AG04449 (cell line): ENCODE measurements at regions of chr16 and their contacts with region 1.

Region 1: DNA sequence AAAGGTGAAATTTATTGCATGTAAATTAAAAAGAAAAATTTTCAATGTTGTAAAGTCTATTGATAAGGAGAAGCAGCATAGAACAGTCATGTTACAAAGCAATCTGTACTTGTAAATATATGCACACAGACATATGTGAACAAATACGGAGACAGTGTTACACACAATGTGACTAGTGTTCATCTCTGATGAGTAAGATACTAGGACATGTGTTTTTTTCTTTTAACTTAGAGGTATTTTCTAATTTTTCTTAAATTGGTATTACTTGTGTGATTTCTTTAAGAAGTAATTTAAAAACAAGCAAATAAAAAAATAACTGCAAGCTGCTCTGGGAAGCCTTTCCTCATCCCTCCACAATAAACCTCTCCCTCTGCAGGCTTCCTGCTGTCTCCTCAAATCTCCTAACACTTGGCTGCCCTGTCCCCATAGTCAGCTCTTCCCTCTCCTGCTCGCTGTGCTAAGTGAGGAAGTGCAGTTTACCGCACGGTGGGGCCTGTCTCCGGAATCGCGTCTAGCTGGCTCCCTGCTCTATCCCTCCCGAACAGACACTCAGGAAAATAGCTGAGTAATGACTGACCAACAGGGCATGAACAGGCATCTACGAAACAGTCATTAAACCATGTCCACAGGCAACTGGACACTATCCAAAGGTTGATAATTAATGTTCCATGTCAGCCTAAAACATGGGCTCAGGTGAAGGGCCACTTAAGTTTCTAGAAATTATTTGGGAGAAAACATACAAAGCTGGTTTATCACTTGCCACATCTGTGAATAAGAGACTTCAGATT is 35.9 kb downstream of the CMTM4 start:
- DNase-seq: no peak
- H3K4me3 ChIP-seq: no peak overlapping the region
- CTCF ChIP-seq: peak; percentile 53

Region 2: DNA sequence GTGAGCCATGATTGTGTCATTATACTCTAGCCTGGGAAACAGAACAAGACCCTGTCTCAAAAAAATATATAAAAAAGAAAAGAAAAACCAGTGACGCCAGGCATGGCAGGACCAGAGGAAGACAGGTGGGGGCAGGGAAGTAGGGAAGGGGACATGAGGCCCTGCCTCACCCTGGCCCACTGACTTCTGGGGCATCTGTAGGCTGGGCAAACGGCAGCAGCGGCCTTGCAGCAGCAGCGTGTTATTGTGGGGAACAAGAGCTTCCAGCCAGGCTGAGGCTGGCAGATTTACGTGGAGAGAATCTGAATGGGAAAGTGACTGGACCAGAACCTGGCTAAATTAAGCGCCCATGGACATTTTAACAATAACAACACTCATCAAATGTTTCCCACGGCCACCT is 16.6 kb after region 1 on chr16:
- CTCF ChIA-PET with region 1: interaction called, 15 read pairs
- POLR2A ChIA-PET with region 1: no interaction called
- DNase-seq: no peak
- H3K4me3 ChIP-seq: no peak overlapping the region
- CTCF ChIP-seq: no peak

Region 3: DNA sequence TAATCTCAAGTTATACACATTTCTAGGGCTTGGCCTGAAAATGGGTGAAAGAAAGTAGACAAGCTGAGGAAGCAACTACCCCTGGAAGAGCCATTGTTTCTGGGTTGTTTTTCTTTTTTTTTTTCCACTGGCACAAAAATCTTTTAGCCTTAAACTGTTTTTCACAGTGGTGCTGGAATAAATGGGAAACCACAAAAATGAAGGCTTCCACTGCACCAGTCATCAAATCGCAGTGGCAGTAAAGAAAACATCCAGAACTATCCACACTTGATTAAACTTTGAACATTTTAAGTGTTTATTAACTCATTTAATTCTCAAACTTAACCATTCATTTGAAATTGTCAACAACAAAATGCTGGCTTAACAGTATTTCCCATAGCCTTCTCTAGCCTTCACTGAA is 21.7 kb after region 1 on chr16:
- CTCF ChIA-PET with region 1: interaction called, 15 read pairs
- POLR2A ChIA-PET with region 1: no interaction called
- DNase-seq: no peak
- H3K4me3 ChIP-seq: no peak overlapping the region
- CTCF ChIP-seq: no peak

Region 4: DNA sequence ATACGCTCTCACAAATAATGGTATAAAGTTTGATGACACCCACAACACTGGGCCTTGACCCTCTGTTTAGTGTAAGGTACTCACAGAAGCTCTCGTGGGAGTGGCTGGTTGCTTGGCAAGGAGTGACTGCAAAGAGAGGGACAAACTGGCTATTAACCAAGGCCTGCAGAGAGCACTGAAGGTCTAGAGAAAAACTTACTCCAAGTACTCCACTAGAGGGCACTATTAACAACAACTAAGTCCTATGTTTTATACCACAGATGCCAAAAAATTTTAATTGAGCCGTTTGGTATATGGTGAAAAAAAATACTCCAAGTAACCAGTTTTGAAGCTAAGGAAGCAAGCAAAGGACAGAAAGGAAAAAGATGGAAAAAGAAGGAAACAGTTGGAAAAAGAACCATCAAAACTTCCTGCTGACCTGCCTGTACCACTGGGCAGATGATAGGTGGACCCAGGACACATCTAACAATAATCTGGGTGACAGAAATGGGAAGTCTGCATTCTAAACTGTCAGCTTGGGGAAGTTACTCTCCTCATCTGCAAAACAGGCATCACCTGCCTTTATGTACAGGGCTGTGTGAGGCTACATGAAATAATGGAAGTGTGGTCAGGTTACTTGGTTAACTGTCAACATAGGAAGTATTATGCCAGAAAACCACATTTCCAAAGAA is 67.6 kb after region 1 on chr16:
- CTCF ChIA-PET with region 1: interaction called, 41 read pairs
- POLR2A ChIA-PET with region 1: interaction called, 3 read pairs
- DNase-seq: no peak
- H3K4me3 ChIP-seq: no peak overlapping the region
- CTCF ChIP-seq: peak; percentile 51

Region 5: GRCh38 chr16:66824006-66824405 is 163.4 kb after region 1 on chr16:
- CTCF ChIA-PET with region 1: no interaction called
- POLR2A ChIA-PET with region 1: no interaction called
- DNase-seq: no peak
- H3K4me3 ChIP-seq: no peak overlapping the region
- CTCF ChIP-seq: no peak